PC-9 (cell line): ENCODE measurements at regions of chrX and their contacts with region 1.

Region 1: GRCh38 chrX:120617996-120618630 is 11.7 kb downstream of the C1GALT1C1 start:
- DNase-seq: no peak
- H3K4me3 ChIP-seq: no peak overlapping the region
- H3K27ac ChIP-seq: peak overlapping the region; percentile 37; the same call in 1 of the 2 replicates
- H3K4me1 ChIP-seq: peaks cover 6% of the 10 kb centered on the region; the same call in 1 of the 2 replicates
- H3K27me3 ChIP-seq: no peaks in the 10 kb centered on the region
- CTCF ChIP-seq: no peak

Region 2: DNA sequence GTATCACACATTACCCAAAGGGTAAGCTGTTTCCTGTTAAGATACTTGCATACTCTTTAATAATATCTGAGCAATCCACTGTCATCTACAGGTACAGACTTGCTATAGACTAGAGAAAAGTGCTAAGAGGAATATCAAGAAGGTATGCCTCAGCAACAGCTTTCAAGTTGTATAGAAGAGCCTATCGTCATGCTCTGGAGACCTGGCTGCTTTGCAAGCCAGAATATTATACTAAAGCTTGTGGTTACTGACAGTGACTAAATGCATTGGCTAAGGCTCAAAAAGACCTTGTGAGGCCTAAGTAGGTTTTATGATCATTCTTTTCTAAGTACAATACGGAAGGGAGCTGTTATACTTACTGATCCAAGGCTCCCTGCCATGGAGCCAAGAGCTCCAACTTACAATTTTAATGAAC is 160.3 kb before region 1 on chrX:
- CTCF ChIA-PET with region 1: interaction called, 17 read pairs
- POLR2A ChIA-PET with region 1: no interaction called
- intact Hi-C with region 1: no loop called
- DNase-seq: no peak
- H3K4me3 ChIP-seq: no peak overlapping the region
- H3K27ac ChIP-seq: no peak overlapping the region
- H3K4me1 ChIP-seq: no peaks in the 10 kb centered on the region
- H3K27me3 ChIP-seq: no peaks in the 10 kb centered on the region
- CTCF ChIP-seq: no peak

Region 3: GRCh38 chrX:120522820-120523219 is 95.3 kb before region 1 on chrX:
- CTCF ChIA-PET with region 1: no interaction called
- POLR2A ChIA-PET with region 1: no interaction called
- intact Hi-C with region 1: loop called (anchors 5 kb)
- DNase-seq: no peak
- H3K4me3 ChIP-seq: no peak overlapping the region
- H3K27ac ChIP-seq: no peak overlapping the region
- H3K4me1 ChIP-seq: peaks cover 14% of the 10 kb centered on the region
- H3K27me3 ChIP-seq: no peaks in the 10 kb centered on the region
- CTCF ChIP-seq: no peak